Mammary epithelial cell (primary cell): ENCODE measurements at regions of chr9 and their contacts with region 1.

Region 1: DNA sequence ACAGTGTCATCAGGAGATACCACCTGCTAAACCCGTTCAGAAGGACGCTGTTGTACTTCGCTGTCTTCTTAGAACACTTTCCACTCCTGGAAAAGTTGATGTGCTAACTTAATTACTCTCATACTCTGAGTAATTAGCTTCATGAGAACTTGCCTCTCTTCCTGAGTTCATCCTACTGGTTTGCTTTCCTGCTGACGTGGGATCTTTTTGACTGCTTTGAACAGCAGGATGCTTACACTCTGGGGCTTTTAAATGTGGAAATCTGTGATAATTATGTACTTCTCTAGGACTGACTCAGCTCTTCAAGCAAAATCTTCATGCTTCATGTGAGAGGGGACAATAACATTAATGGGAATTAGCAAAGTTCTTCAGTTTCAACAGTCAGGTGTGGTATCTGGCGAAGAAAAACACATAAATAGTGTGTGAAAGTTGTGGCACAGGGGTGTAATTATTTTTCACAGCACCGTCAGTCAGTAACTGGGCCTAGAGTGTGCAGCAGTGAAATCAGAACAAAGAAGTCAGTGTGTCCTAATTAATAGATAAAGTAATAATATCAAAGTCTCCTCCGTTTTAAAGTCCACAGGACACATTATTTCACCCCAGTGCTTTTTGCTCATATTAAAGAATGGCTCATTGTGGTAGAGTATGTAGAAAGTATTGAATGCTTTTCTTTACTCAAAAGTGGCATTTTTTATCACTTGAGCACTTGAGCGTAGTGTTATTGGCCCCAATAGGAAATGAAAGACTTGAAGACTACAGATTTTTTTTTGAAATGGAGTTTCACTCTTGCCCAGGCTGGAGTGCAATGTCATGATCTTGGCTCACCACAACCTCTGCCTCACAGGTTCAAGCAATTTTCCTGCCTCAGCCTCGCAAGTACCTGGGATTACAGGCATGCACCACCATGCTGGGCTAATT is 140.9 kb upstream of the DMRT1 start:
- DNase-seq: no peak
- H3K4me3 ChIP-seq: no peak overlapping the region
- H3K27ac ChIP-seq: no peak overlapping the region
- H3K4me1 ChIP-seq: peaks cover 33% of the 10 kb centered on the region
- H3K27me3 ChIP-seq: no peaks in the 10 kb centered on the region
- CTCF ChIP-seq: no peak

Region 2: GRCh38 chr9:655875-656274 is 44.7 kb before region 1 on chr9:
- CTCF ChIA-PET with region 1: no interaction called
- dilution Hi-C with region 1: no loop called
- in situ Hi-C with region 1: no loop called
- intact Hi-C with region 1: loop called (anchors 5 kb)
- DNase-seq: peak; percentile 61
- H3K4me3 ChIP-seq: no peak overlapping the region
- H3K27ac ChIP-seq: peak overlapping the region; percentile 79
- H3K4me1 ChIP-seq: peaks cover 32% of the 10 kb centered on the region
- H3K27me3 ChIP-seq: no peaks in the 10 kb centered on the region
- CTCF ChIP-seq: no peak

Region 3: GRCh38 chr9:726059-726458 is 25.4 kb after region 1 on chr9:
- CTCF ChIA-PET with region 1: no interaction called
- dilution Hi-C with region 1: no loop called
- in situ Hi-C with region 1: no loop called
- intact Hi-C with region 1: no loop called
- DNase-seq: no peak
- H3K4me3 ChIP-seq: no peak overlapping the region
- H3K27ac ChIP-seq: no peak overlapping the region
- H3K4me1 ChIP-seq: peaks cover 14% of the 10 kb centered on the region
- H3K27me3 ChIP-seq: no peaks in the 10 kb centered on the region
- CTCF ChIP-seq: no peak